WTC11 (cell line): ENCODE measurements at regions of chrX and their contacts with region 1.

Region 1: DNA sequence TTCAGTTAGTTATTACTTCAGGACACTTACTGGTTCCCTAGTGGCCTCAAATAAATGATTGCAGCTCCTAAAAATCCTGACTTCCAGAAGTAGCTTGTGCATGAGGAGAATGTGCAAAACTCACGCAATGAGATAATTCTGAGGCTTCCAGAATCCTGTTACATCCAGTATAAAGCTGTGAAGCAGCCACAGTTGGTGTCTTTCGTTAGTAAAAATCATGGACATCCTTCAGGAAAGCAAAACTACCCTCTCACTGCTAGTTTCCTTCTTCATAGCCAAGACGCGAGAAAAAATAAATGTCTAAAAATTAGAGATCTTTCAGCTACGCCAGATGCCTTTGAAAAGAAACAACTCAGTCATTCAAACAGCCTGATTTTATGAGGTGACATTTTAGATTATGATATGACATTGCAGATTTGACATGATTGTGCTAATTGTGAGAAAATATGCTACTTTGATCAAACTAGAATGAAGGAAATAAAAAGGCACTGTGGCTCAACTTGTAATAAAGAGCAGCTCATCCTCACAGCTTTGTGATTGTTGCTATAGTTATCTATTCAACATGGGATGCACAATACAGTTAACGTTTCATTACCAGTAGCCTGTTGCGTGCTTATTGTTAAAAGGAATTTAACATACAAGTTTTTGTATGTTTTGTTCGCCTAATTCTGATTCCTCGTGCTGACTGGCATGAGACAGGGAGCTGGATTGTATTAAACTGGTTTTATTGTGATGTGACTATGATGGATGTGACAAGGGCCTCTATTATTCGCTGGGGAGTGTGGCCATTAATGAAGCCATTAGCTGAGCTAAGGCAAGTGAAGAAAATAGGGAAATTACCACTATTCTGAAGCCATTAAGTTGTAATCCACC is 40.5 kb downstream of the AFF2 start:
- DNase-seq: no peak
- ATAC-seq: no peak
- H3K4me3 Mint-ChIP-seq: no peak overlapping the region
- H3K27ac Mint-ChIP-seq: no peak overlapping the region
- H3K4me1 Mint-ChIP-seq: peaks cover 38% of the 10 kb centered on the region
- H3K27me3 Mint-ChIP-seq: no peaks in the 10 kb centered on the region
- CTCF ChIP-seq: no peak

Region 2: DNA sequence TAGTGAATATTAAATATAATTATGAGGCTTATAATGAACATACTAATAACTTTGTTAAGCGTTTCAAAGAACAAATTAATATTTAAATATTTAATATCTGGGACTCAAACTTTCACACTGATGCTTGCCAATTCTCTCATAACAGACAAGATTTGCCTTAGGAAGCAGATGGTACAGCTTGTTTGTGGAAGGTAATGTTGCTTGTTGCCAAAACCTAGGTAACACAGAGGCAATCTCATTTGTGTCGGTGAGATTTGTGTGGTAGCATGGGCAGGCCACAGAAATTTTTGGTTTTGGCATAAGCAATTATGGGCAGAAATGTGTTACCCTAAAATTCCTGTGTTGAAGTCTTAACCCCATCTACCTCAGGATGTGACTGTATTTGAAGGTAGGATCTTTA is 155.4 kb before region 1 on chrX:
- CTCF ChIA-PET with region 1: no interaction called
- POLR2A ChIA-PET with region 1: no interaction called
- DNase-seq: no peak
- ATAC-seq: no peak
- H3K4me3 Mint-ChIP-seq: no peak overlapping the region
- H3K27ac Mint-ChIP-seq: no peak overlapping the region
- H3K4me1 Mint-ChIP-seq: peaks cover 34% of the 10 kb centered on the region
- H3K27me3 Mint-ChIP-seq: no peaks in the 10 kb centered on the region; the same call in 1 of the 2 replicates
- CTCF ChIP-seq: no peak

Region 3: GRCh38 chrX:148466292-148466691 is 74.6 kb before region 1 on chrX:
- CTCF ChIA-PET with region 1: no interaction called
- POLR2A ChIA-PET with region 1: no interaction called
- DNase-seq: no peak
- ATAC-seq: no peak
- H3K4me3 Mint-ChIP-seq: no peak overlapping the region
- H3K27ac Mint-ChIP-seq: no peak overlapping the region
- H3K4me1 Mint-ChIP-seq: peaks cover 7% of the 10 kb centered on the region; the same call in 1 of the 2 replicates
- H3K27me3 Mint-ChIP-seq: peaks cover 22% of the 10 kb centered on the region
- CTCF ChIP-seq: no peak

Region 4: GRCh38 chrX:148530464-148531077 is 10.3 kb before region 1 on chrX:
- CTCF ChIA-PET with region 1: interaction called, 16 read pairs
- POLR2A ChIA-PET with region 1: no interaction called
- DNase-seq: no peak
- ATAC-seq: no peak
- H3K4me3 Mint-ChIP-seq: no peak overlapping the region
- H3K27ac Mint-ChIP-seq: no peak overlapping the region
- H3K4me1 Mint-ChIP-seq: peaks cover 10% of the 10 kb centered on the region
- H3K27me3 Mint-ChIP-seq: no peaks in the 10 kb centered on the region
- CTCF ChIP-seq: peak; percentile 55

Region 5: GRCh38 chrX:148574237-148574973 is 33.5 kb after region 1 on chrX:
- CTCF ChIA-PET with region 1: no interaction called
- POLR2A ChIA-PET with region 1: no interaction called
- DNase-seq: no peak
- ATAC-seq: no peak
- H3K4me3 Mint-ChIP-seq: no peak overlapping the region
- H3K27ac Mint-ChIP-seq: no peak overlapping the region
- H3K4me1 Mint-ChIP-seq: peaks cover 10% of the 10 kb centered on the region; the same call in 1 of the 2 replicates
- H3K27me3 Mint-ChIP-seq: no peaks in the 10 kb centered on the region
- CTCF ChIP-seq: no peak

Region 6: DNA sequence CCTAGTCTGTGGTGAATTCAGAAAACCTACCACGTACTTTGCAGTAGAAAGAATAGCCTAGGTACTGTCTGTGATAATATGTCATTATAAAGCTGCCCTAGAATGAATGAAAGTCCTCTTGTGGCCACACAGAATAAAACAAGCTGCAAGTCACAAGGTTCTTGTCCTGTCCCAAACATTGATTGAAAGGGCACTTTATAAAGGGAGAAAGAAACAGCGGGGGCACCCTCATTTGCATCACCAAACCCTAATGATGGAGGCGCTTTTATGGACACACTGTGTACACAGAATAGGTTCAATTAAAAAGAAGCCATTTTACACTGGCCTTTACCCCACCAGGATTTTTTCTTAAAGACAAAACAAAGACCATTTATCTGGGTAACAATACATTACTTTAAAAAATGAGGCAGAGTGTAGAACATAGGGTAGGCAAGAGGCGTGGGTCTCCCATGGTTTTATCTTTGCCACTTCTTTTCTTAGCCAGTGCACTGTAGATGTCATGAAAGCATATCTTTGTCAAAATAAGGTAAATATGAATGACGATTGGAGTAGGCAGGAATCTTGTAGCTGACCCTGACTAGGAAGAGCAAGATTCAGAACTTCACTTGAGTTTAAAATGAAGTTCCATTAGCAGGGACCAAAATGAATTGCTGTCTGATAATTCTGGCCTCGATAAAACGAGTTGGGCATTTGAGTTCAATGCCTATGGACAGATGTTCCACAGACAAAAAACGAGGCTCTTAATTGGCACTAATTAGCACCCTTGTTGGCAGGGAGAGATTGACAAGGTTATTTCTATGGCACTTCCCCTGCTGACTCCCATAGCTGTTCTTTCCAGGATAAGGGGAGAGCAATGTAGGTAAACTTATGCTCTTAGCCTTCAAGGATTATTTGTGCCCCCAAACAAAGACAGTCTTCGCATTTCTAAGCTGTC is 324.6 kb after region 1 on chrX:
- CTCF ChIA-PET with region 1: no interaction called
- POLR2A ChIA-PET with region 1: no interaction called
- DNase-seq: no peak
- ATAC-seq: peak; percentile 53
- H3K4me3 Mint-ChIP-seq: no peak overlapping the region
- H3K27ac Mint-ChIP-seq: no peak overlapping the region
- H3K4me1 Mint-ChIP-seq: peaks cover 23% of the 10 kb centered on the region
- H3K27me3 Mint-ChIP-seq: peaks cover 32% of the 10 kb centered on the region
- CTCF ChIP-seq: no peak